ENCODE measurements at regions of chr19 and their contacts with region 1.

Region 1: DNA sequence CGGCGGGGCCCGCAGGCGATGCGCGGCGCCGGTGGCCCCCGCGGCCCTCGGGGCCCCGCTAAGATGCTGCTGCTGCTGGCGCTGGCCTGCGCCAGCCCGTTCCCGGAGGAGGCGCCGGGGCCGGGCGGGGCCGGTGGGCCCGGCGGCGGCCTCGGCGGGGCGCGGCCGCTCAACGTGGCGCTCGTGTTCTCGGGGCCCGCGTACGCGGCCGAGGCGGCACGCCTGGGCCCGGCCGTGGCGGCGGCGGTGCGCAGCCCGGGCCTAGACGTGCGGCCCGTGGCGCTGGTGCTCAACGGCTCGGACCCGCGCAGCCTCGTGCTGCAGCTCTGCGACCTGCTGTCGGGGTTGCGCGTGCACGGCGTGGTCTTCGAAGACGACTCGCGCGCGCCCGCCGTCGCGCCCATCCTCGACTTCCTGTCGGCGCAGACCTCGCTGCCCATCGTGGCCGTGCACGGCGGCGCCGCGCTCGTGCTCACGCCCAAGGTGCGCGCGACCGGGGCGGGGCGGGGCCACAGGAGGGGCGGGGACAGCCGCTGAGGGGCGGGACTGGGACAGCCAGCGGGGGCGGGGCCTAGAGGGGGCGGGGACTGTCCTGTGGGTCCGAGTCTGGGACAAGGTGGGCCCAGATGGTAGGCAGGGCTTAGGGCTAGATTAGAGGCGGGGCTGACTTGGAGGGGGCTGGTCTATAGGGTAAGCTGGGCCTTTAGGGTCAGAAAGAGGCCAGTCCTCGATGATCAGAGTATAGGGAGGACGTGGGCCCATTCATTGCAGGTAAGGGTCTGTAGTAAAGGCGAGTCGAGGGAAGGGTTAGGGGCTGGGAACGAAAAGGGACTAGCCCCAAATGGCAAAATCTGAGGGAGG is 5.1 kb downstream of the GRIN2D start:
- DNase-seq: peak; percentile 86 to 88
- H3K4me3 ChIP-seq: peak overlapping the region; percentile 95
- H3K27ac ChIP-seq: peak overlapping the region; percentile 84
- H3K4me1 ChIP-seq: peaks cover 22% of the 10 kb centered on the region
- H3K27me3 ChIP-seq: peaks cover 11% of the 10 kb centered on the region
- CTCF ChIP-seq: no peak

Region 2: GRCh38 chr19:48348035-48348434 is 50.6 kb before region 1 on chr19:
- CTCF ChIA-PET with region 1: no interaction called
- POLR2A ChIA-PET with region 1: no interaction called
- intact Hi-C with region 1: no loop called
- DNase-seq: no peak
- H3K4me3 ChIP-seq: no peak overlapping the region
- H3K27ac ChIP-seq: no peak overlapping the region
- H3K4me1 ChIP-seq: peaks cover 6% of the 10 kb centered on the region; the same call in 1 of the 2 replicates
- H3K27me3 ChIP-seq: no peaks in the 10 kb centered on the region
- CTCF ChIP-seq: no peak

Region 3: GRCh38 chr19:48372904-48373303 is 25.7 kb before region 1 on chr19:
- CTCF ChIA-PET with region 1: no interaction called
- POLR2A ChIA-PET with region 1: no interaction called
- intact Hi-C with region 1: no loop called
- DNase-seq: no peak
- H3K4me3 ChIP-seq: no peak overlapping the region
- H3K27ac ChIP-seq: no peak overlapping the region
- H3K4me1 ChIP-seq: peaks cover 8% of the 10 kb centered on the region
- H3K27me3 ChIP-seq: no peaks in the 10 kb centered on the region
- CTCF ChIP-seq: no peak

Region 4: DNA sequence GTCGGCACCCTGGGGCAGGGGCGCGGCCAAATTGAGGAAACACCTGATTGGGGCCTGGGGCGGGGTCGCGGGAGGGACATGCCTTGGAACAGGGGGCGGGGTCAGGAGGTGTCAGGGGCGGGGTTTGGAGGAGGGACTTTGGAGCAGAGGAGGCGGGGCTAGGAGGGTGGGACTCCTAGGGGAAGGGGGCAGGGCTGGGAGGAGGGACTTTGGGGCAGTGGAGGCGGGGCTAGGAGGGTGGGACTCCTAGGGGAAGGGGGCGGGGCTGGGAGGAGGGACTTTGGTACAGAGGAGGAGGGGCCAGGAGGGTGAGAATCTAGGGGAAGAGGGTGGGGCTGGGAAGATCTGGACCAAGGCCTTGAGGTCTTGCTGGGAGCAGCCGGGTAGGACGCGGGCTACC is 16.8 kb after region 1 on chr19:
- CTCF ChIA-PET with region 1: interaction called, 13 read pairs
- POLR2A ChIA-PET with region 1: no interaction called
- intact Hi-C with region 1: no loop called
- DNase-seq: peak; percentile 71 to 75
- H3K4me3 ChIP-seq: no peak overlapping the region
- H3K27ac ChIP-seq: no peak overlapping the region
- H3K4me1 ChIP-seq: peaks cover 7% of the 10 kb centered on the region; the same call in 1 of the 2 replicates
- H3K27me3 ChIP-seq: no peaks in the 10 kb centered on the region
- CTCF ChIP-seq: no peak

Region 5: DNA sequence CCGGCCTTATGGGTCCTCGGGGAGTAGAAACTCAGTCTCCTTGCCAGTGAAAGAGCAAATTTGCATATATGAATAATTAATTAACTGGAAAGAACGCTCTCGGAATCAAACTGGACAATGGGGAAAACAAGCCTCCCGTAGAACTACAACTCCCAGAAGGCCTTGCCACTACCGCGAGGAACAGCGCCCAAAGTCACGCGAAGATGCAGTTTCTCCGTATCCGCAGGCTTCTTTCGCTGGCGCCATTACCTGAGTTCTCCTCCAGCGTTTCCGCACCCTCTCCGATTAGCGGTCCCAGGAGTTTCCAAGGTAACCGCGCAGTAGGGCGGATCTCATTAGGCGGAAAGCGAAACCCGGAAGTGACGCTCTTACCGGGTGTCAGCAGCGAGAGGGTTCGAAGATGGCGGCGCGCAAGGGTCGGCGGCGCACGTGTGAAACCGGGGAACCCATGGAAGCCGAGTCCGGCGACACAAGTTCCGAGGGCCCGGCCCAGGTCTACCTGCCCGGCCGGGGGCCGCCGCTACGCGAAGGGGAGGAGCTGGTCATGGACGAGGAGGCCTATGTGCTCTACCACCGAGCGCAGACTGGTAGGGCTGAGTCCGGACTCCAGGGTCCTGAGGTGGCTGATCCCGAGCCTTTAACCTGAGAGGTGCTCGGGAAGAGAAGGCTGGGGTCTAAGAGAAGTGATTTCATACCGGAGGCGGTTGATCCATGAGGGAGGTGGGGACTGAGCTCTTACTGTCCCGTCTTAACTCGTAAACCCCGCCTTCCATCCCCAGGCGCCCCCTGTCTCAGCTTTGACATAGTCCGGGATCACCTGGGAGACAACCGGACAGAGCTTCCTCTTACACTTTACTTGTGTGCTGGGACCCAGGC is 47.2 kb after region 1 on chr19 and contains the start of gene GRWD1:
- CTCF ChIA-PET with region 1: no interaction called
- POLR2A ChIA-PET with region 1: no interaction called
- intact Hi-C with region 1: loop called (anchors 1 kb)
- DNase-seq: peak; percentile 87 to 95
- H3K4me3 ChIP-seq: peak within 1 kb of the TSS; percentile 92
- H3K27ac ChIP-seq: peak within 1 kb of the TSS; percentile 78
- H3K4me1 ChIP-seq: peaks cover 23% of the 10 kb centered on the region; the same call in 1 of the 2 replicates
- H3K27me3 ChIP-seq: no peaks in the 10 kb centered on the region
- CTCF ChIP-seq: peak; percentile 54; the same call in 1 of the 2 replicates
- total RNA-seq, gene GRWD1: 35.5 and 44.2 TPM in 2 replicates

Region 6: DNA sequence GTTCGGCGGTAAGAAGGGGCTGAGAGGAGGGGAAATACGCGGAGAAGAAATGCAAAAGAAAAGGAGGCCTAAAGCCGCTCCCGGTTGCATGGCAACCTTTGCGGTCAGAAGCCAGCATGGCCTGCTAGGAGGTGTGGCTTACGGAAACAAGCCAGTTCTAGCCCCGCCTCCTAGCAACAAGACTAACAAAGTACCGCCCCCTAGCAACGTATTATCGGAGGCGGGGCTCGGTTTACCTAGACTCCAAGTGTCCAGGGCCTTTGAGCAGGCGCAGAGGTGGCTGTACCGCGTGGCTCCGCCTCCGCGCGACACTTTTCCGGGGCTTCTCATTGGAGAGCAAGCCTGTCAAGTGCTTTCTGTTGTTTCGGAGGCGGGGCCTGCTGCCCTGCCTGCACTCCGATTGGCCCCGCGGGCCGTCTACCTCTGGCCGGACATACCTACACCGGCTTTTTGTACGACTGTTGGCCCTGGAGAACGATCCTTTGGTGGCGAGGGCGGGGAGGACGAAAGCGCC is 70.2 kb after region 1 on chr19:
- CTCF ChIA-PET with region 1: no interaction called
- POLR2A ChIA-PET with region 1: no interaction called
- intact Hi-C with region 1: loop called (anchors 5 kb)
- DNase-seq: peak; percentile 100
- H3K4me3 ChIP-seq: peak overlapping the region; percentile 93
- H3K27ac ChIP-seq: peak overlapping the region; percentile 82; the same call in 1 of the 2 replicates
- H3K4me1 ChIP-seq: peaks cover 11% of the 10 kb centered on the region
- H3K27me3 ChIP-seq: no peaks in the 10 kb centered on the region
- CTCF ChIP-seq: no peak

Region 7: GRCh38 chr19:48479686-48480085 is 81.1 kb after region 1 on chr19:
- CTCF ChIA-PET with region 1: no interaction called
- POLR2A ChIA-PET with region 1: no interaction called
- intact Hi-C with region 1: no loop called
- DNase-seq: no peak
- H3K4me3 ChIP-seq: no peak overlapping the region
- H3K27ac ChIP-seq: no peak overlapping the region
- H3K4me1 ChIP-seq: no peaks in the 10 kb centered on the region; the same call in 1 of the 2 replicates
- H3K27me3 ChIP-seq: no peaks in the 10 kb centered on the region
- CTCF ChIP-seq: no peak

Measured in PC-9 (cell line).